HEK293T (cell line): ENCODE measurements at regions of chr18 and their contacts with region 1.

Region 1: DNA sequence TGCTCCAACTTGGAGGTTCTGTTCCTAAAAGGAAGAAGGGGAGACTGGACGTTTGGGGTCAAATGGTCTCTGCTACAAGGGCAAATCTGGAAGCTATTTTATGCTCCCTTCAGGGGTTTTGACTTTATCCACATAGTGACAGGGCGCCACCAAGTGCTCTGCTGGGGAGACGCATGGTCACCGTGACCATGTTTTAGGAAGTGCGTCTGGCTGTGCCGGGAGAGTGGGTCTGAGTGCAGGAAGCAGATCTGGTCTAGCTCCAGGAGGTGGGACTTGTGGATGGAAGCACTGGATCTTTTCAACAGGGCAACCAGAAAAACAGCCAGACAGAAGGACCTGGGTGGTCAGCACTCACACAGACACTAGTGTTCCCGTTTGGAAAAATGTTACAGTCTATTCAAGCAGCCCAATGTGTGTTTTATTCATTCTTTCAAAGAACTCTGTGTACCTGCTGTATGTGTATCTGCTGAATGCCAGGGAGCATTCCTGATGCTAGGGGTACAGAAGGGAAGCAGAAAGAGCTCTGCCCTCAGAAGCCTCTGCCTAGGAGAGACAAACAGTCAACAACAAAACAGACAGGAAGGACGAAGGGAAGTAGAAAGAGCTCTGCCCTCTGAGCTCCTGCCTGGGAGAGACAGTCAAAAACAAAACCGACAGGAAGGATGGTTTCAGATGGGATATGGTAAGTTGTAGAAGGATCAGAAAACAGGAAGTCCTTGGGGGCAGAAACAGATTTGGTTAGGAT is 14.3 kb downstream of the IMPA2 start:
- DNase-seq: peak; percentile 66

Region 2: DNA sequence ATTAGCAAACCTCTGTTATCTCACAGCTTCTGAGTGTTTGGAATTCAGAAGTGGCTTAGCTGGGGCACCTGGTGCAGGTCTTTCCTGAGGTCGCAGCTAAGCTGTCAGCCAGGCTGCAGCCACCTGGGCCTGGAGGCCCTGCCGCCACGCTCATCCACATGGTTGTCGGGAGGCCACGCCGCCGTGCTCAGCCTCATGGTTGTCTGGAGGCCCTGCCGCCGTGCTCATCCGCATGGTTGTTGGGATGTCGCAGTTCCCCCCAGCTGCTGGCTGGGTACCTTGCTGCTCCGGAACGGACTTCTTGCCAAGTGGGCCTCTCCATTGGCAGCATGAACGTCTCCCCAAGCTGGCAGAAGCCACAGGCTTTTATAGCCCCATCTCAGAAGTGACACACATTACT is 63.2 kb before region 1 on chr18:
- CTCF ChIA-PET with region 1: interaction called, 78 read pairs
- POLR2A ChIA-PET with region 1: interaction called, 6 read pairs
- DNase-seq: no peak

Region 3: GRCh38 chr18:11937874-11938478 is 57.6 kb before region 1 on chr18:
- CTCF ChIA-PET with region 1: interaction called, 78 read pairs
- POLR2A ChIA-PET with region 1: interaction called, 6 read pairs
- DNase-seq: peak; percentile 47

Region 4: DNA sequence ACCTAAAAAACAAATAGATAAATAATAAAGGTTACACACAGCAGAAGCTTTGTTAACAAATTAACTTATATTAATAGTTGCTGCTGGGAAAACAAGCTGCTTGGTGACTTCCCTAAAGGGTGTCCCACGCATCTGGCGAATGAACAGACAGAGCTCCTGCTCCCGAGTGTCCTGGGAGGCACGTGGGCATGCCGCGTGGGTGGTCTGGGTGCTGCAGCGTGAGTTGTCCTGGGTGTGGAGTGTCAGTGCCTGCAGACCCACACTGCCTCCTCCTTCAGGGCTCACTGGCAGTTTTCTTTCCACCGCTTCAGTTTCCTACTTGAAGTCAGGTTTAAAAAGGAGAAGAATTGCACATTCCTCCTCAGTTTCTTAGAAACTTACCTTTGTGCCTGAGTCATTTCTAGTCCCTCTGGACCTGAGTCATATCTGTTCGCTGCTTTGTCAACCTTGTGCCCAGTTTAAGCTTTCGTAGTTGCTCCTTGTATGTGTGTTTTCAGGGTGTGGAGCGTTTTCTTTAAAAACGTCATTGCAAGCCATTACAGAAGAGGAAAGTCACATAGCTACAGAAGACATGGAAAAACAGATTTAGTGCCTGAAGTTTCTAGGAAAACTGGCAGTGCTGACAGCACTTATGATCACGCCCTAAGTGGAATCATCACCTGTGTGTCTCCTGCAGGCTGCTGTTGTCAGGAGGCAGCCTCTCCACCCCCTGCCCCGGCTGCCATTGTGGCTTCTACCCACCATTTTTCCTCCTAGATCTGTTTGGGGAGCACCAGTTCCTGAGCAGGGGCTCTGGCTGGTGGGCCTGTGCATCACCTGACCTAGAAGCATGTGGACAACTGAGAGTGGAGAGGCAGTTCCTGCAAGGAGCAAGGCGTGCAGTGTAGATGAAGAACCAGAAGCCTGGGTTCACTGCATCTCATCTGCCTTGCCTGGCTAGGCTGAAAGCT is 10.2 kb after region 1 on chr18:
- CTCF ChIA-PET with region 1: no interaction called
- POLR2A ChIA-PET with region 1: no interaction called
- DNase-seq: no peak